Activated T-helper 1 cell treated with anti-CD3 and anti-CD28 coated beads, Interleukin-12 subunit alpha, Interleukin-12 subunit beta, Interleukin-2, Interleukin-4 antibody, amounts not matched to agents 30 ng/mL and 10 ng/mL and 1 ng/mL, durations not matched to agents 14 hours and 24 hours and 36 hours (primary cell): ENCODE measurements at regions of chr7 and their contacts with region 1.

Region 1: GRCh38 chr7:134605973-134606923 is 40.4 kb upstream of the BPGM start:
- DNase-seq: peak; percentile 27
- H3K4me3 Mint-ChIP-seq: peak overlapping the region; percentile 67
- H3K27ac Mint-ChIP-seq: peak overlapping the region; percentile 27
- H3K4me1 Mint-ChIP-seq: peaks cover 11% of the 10 kb centered on the region
- H3K27me3 Mint-ChIP-seq: peaks cover 33% of the 10 kb centered on the region

Region 2: DNA sequence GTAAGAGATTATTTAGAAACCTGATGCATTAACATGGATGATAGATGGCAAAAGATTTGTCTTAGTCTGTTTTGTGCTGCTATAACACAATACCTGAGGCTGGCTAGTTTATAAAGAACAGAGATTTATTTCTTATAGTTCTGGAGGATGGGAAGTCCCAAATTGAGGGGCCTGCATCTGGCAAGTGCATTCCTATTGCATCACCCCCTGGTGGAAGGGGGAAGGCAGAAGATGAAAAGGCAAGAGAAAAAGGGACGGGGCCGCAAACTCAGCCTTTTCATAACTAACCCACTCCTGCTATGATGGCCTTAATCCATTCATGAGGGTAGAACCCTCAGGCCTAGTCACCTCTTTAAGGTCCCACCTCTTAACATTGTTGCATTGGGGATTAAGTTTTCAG is 632.5 kb before region 1 on chr7:
- intact Hi-C with region 1: no loop called
- DNase-seq: no peak
- H3K4me3 Mint-ChIP-seq: no peak overlapping the region
- H3K27ac Mint-ChIP-seq: no peak overlapping the region
- H3K4me1 Mint-ChIP-seq: no peaks in the 10 kb centered on the region
- H3K27me3 Mint-ChIP-seq: no peaks in the 10 kb centered on the region

Region 3: GRCh38 chr7:134432296-134433152 is 173.7 kb before region 1 on chr7:
- intact Hi-C with region 1: loop called (anchors 1 kb)
- DNase-seq: peak; percentile 61
- H3K4me3 Mint-ChIP-seq: peak overlapping the region; percentile 78
- H3K27ac Mint-ChIP-seq: peak overlapping the region; percentile 79
- H3K4me1 Mint-ChIP-seq: peaks cover 23% of the 10 kb centered on the region
- H3K27me3 Mint-ChIP-seq: peaks cover 3% of the 10 kb centered on the region

Region 4: GRCh38 chr7:134547397-134548054 is 58.7 kb before region 1 on chr7:
- intact Hi-C with region 1: loop called (anchors 1 kb)
- DNase-seq: peak; percentile 32
- H3K4me3 Mint-ChIP-seq: no peak overlapping the region
- H3K27ac Mint-ChIP-seq: no peak overlapping the region
- H3K4me1 Mint-ChIP-seq: peaks cover 12% of the 10 kb centered on the region
- H3K27me3 Mint-ChIP-seq: peaks cover 11% of the 10 kb centered on the region

Region 5: GRCh38 chr7:134676743-134677142 is 70.5 kb after region 1 on chr7:
- intact Hi-C with region 1: no loop called
- DNase-seq: no peak
- H3K4me3 Mint-ChIP-seq: no peak overlapping the region
- H3K27ac Mint-ChIP-seq: no peak overlapping the region
- H3K4me1 Mint-ChIP-seq: peaks cover 9% of the 10 kb centered on the region
- H3K27me3 Mint-ChIP-seq: no peaks in the 10 kb centered on the region

Region 6: GRCh38 chr7:134811765-134812164 is 205.5 kb after region 1 on chr7:
- intact Hi-C with region 1: no loop called
- DNase-seq: no peak
- H3K4me3 Mint-ChIP-seq: no peak overlapping the region
- H3K27ac Mint-ChIP-seq: no peak overlapping the region
- H3K4me1 Mint-ChIP-seq: no peaks in the 10 kb centered on the region
- H3K27me3 Mint-ChIP-seq: peaks cover 3% of the 10 kb centered on the region